Heart right ventricle (tissue), 16 donors: ENCODE measurements at regions of chr9 and their contacts with region 1.

Region 1: DNA sequence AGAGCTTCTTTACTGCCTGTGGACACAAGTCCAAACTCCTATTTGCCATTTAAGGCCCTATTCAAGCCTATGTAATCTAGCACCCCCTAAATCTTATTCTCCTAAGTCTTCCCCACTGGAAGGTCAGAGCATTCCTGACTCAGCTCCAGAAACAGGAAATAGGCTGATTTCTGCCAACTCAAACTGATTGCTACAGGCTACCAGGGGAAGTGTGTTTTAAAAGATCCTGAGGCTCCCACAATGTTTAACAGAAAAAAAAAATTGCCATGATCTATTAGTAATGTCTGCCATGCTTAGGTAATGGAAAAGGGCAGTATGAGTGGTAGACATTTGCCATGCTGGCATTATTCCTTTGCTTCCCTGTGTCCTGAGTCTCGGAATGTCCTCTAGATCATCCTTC is 65.8 kb upstream of the BRINP1 start:
- DNase-seq: no peak
- ATAC-seq: no peak
- H3K4me3 ChIP-seq: no peak overlapping the region
- H3K27ac ChIP-seq: no peak overlapping the region
- H3K4me1 ChIP-seq: no peaks in the 10 kb centered on the region
- H3K27me3 ChIP-seq: peaks cover 0 to 3% (median 0%) of the 10 kb centered on the region in 7 donors
- CTCF ChIP-seq: no peak

Region 2: DNA sequence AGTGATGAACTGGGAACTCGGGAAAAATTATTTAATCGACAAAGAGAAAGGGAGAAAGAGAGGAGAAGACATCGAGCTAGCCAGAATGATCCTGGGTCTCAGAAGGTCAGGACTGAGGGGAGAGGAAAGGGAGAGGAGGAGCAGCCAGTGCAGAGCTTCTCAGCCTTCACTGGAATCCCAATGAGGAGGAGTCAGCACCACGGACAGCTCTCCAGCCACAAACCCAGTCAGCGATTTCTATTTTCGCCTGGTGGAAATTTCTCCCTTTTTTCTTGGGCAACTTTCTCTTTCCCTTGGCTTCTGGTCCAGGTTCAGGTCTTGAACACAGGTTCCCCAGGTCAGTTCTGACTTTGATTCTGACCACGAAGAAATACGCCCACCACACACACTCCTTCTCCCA is 64.2 kb before region 1 on chr9:
- intact Hi-C with region 1: loop called in 1 of 10 experiments (anchors 10 kb)
- DNase-seq: peak; percentile 29 to 32
- ATAC-seq: peak in 3 of 8 donors; percentile 46 to 57 (median 48)
- H3K4me3 ChIP-seq: no peak overlapping the region
- H3K27ac ChIP-seq: no peak overlapping the region
- H3K4me1 ChIP-seq: peaks cover 0 to 16% (median 5%) of the 10 kb centered on the region in 9 donors
- H3K27me3 ChIP-seq: peaks cover 5 to 52% (median 40%) of the 10 kb centered on the region in 7 donors
- CTCF ChIP-seq: no peak